ENCODE measurements at regions of chr5 and their contacts with region 1.

Region 1: GRCh38 chr5:65925601-65926275 is 637 bp upstream of the ERBIN start:
- DNase-seq: peak; percentile 74
- H3K4me3 Mint-ChIP-seq: peak overlapping the region; percentile 88
- H3K27ac Mint-ChIP-seq: peak overlapping the region; percentile 92
- H3K4me1 Mint-ChIP-seq: peaks cover 42% of the 10 kb centered on the region
- H3K27me3 Mint-ChIP-seq: peaks cover 22% of the 10 kb centered on the region

Region 2: GRCh38 chr5:64768358-64769312 is 1157.1 kb before region 1 on chr5 and contains the starts of genes CWC27 and SREK1IP1:
- intact Hi-C with region 1: loop called (anchors 5 kb)
- DNase-seq: peak; percentile 79
- H3K4me3 Mint-ChIP-seq: peak within 1 kb of the TSS; percentile 98
- H3K27ac Mint-ChIP-seq: peak within 1 kb of the TSS; percentile 96
- H3K4me1 Mint-ChIP-seq: peaks cover 51% of the 10 kb centered on the region
- H3K27me3 Mint-ChIP-seq: no peaks in the 10 kb centered on the region
- total RNA-seq, gene CWC27: 29.1 and 33.5 TPM in 2 replicates
- total RNA-seq, gene SREK1IP1: 29.4 and 31.7 TPM in 2 replicates

Region 3: GRCh38 chr5:65699338-65699737 is 226.4 kb before region 1 on chr5:
- intact Hi-C with region 1: no loop called
- DNase-seq: no peak
- H3K4me3 Mint-ChIP-seq: no peak overlapping the region
- H3K27ac Mint-ChIP-seq: no peak overlapping the region
- H3K4me1 Mint-ChIP-seq: no peaks in the 10 kb centered on the region
- H3K27me3 Mint-ChIP-seq: no peaks in the 10 kb centered on the region

Region 4: GRCh38 chr5:65721720-65722574 is 203.8 kb before region 1 on chr5 and contains the starts of genes NLN and SGTB:
- intact Hi-C with region 1: loop called (anchors 1 kb)
- DNase-seq: peak; percentile 81
- H3K4me3 Mint-ChIP-seq: peak within 1 kb of the TSS; percentile 95
- H3K27ac Mint-ChIP-seq: peak within 1 kb of the TSS; percentile 92
- H3K4me1 Mint-ChIP-seq: peaks cover 34% of the 10 kb centered on the region
- H3K27me3 Mint-ChIP-seq: no peaks in the 10 kb centered on the region
- total RNA-seq, gene NLN: 24.4 TPM in 2 replicates
- total RNA-seq, gene SGTB: 11.3 and 12.2 TPM in 2 replicates

Region 5: GRCh38 chr5:65803699-65804391 is 121.9 kb before region 1 on chr5:
- intact Hi-C with region 1: loop called (anchors 1 kb)
- DNase-seq: no peak
- H3K4me3 Mint-ChIP-seq: peak overlapping the region; percentile 55
- H3K27ac Mint-ChIP-seq: peak overlapping the region; percentile 31
- H3K4me1 Mint-ChIP-seq: peaks cover 39% of the 10 kb centered on the region
- H3K27me3 Mint-ChIP-seq: no peaks in the 10 kb centered on the region

Region 6: GRCh38 chr5:66010476-66010875 is 84.7 kb after region 1 on chr5:
- intact Hi-C with region 1: loop called (anchors 5 kb)
- DNase-seq: no peak
- H3K4me3 Mint-ChIP-seq: no peak overlapping the region
- H3K27ac Mint-ChIP-seq: no peak overlapping the region
- H3K4me1 Mint-ChIP-seq: peaks cover 29% of the 10 kb centered on the region
- H3K27me3 Mint-ChIP-seq: no peaks in the 10 kb centered on the region

Region 7: DNA sequence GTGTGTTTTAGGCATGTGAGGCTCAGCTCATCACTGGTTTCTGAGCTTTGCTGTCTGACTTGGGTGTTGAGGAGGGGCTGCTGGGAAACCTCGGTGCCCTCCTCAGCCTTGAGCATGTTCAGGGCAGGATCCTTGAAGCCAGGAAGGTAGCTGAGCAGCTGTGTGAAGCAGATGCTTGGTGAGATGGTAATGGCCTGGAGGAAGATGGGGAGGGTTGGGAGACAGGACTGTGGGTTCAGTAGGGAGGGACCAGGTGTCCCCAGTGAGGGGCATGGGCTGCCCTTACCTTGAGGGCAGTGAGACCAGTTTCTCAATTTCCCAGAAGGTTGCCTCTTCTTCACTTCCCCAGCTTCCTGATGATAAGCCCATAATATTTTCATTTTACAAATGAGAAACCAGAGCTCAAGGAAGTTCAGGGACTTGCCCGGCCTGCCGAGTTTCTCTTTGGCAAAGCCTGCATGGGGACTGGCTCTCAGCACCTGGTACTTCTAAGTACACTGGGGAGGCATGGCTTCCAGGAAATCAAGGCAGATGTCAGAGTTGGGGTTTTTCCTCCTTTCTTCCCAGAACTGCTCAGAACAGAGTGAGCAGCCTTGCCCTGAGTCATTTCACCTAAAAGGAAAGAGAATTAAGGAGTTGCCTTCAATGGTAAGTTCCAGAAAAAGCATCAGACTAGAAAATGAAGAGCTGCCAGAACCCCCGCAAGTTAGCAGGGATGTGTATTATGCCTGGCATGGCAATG is 896.1 kb after region 1 on chr5:
- intact Hi-C with region 1: loop called (anchors 5 kb)
- DNase-seq: peak; percentile 56
- H3K4me3 Mint-ChIP-seq: peak overlapping the region; percentile 74
- H3K27ac Mint-ChIP-seq: peak overlapping the region; percentile 93
- H3K4me1 Mint-ChIP-seq: peaks cover 83% of the 10 kb centered on the region
- H3K27me3 Mint-ChIP-seq: no peaks in the 10 kb centered on the region